ENCODE measurements at regions of chr21 and their contacts with region 1.

Region 1: DNA sequence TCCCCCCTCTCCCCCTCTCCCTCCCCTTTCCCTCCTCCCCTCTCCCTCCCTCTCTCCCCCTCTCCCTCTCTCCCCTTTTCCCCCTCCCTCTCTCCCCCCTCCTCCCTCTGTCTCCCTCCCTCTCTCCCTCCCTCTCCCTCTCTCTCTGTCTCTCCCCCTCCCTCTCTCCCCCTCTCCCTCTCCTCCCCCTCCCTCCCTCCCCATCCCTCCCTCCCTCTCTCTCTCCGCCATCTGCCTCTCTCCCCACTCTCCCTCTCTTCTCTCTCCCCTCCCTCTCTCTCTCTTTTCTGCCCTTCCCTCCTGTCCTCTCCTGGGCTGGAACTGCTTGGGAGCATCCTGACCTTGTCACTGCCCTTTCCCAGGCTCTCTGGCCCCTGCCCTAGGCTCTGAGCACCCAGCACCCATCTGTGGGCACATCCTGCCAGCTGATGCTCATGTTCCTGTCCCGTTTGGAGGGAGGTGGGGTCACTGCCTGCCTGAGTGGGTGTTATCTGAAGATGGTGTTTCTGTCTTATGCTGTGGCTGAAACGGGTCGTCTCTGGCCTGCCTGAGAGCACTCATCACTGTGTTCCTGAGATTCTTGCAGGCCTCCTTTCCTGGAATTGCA is 10.8 kb downstream of the FTCD start:
- DNase-seq: no peak
- H3K4me3 ChIP-seq: no peak overlapping the region
- H3K27me3 ChIP-seq: peaks cover 2% of the 10 kb centered on the region; the same call in 1 of the 2 replicates
- CTCF ChIP-seq: no peak

Region 2: DNA sequence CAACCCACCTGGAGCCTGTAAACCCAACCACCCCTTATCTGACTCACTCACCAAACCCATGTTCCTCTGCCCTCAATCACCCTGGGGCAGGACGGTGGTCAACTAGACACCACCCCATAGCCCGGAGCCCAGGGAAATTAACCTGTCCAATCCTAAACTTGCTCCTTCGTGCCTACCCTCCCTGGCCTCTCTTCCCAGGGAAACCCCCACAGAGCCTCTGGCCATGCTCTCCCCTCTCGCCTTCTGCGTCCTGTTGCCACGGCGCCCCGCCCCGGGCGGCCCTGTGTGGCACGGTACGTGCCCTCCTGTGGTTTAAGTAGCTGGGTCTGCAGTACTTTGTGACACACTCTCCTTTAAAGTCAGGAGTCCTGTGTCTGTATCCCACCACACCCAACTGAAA is 14.8 kb after region 1 on chr21:
- CTCF ChIA-PET with region 1: interaction called, 10 read pairs
- POLR2A ChIA-PET with region 1: no interaction called
- DNase-seq: no peak
- H3K4me3 ChIP-seq: no peak overlapping the region
- H3K27me3 ChIP-seq: no peaks in the 10 kb centered on the region
- CTCF ChIP-seq: no peak

Region 3: GRCh38 chr21:46229133-46230106 is 84.9 kb after region 1 on chr21:
- CTCF ChIA-PET with region 1: interaction called, 21 read pairs
- POLR2A ChIA-PET with region 1: no interaction called
- DNase-seq: no peak
- H3K4me3 ChIP-seq: peak overlapping the region; percentile 65
- H3K27me3 ChIP-seq: no peaks in the 10 kb centered on the region
- CTCF ChIP-seq: peak; percentile 73

Measured in BJ (cell line).